ENCODE measurements at regions of chr14 and their contacts with region 1.

Region 1: DNA sequence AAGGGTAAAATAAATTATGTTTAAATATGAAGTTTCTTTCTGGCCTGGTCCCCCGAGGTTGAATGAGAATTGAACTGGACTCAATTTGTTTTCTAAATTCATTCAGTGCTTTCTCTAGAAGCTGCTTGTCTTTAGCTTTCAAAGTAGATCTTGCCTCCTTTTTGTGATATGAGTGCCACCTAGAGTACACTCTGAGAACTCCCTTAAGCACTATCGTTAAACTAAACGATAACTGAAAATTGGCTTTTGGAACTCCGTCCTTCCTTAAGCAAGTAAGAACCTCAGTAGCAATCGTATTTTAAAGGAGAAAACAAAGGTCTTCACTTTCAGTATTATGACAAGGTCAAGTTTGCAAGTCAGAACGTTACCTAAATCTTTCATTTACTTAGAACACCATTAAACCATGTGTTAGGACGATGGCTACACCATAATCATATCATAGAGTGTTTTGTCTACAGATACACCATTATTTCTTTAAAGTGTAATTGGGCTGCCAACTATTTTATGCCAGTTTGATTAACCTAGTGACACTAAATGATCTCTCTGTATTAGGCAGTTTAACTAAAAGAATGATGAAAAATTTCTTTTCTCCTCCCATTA is 364.8 kb downstream of the SNAPC1 start:
- DNase-seq: no peak
- ATAC-seq: peak; percentile 46 to 86

Region 2: DNA sequence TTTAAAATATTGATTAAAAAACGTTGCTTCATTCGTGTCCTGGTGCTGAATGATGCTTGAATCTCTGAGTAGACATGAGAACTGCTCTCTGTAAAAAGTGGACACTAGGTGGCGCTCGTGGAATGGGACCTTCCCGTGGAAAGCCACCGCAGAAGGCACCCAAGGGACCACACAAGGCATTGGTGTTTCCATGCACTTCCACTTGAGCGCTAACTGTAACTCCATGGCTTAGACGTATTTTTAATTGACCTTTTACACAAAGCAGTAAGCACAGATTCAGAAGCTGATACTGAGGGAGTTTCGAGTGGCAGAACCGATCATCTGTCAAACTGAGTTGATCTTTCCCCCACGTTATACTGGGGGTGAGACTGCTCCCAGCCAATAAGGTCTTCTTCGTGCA is 670.3 kb before region 1 on chr14:
- intact Hi-C with region 1: loop called in 1 of 2 experiments (anchors 5 kb)
- DNase-seq: peak; percentile 89
- ATAC-seq: peak; percentile 68 to 74

Region 3: GRCh38 chr14:61568572-61569131 is 558.3 kb before region 1 on chr14:
- intact Hi-C with region 1: no loop called
- DNase-seq: peak; percentile 38
- ATAC-seq: peak; percentile 45 to 48

Region 4: DNA sequence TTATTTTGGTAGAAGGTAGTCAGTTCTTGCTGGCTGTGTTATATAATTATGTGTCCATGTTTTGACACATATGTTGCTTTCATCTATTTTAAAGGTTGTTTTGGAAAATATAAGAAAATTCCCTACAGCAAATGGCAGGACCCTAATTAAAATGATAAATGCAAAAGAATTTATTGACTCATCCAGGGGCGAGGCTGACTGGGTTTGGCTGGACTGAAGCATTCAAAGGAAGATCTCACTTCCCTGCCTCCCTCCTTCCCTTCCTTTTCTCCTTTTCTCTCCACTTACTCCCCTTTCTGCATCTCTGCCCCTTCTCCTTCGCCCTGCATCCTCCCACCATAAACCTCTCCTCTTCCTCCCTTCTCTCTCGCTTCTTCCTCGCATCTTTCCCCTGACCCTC is 235.2 kb before region 1 on chr14:
- intact Hi-C with region 1: loop called in 1 of 2 experiments (anchors 2 kb)
- DNase-seq: no peak
- ATAC-seq: no peak